CD4-positive, alpha-beta memory T cell (primary cell): ENCODE measurements at regions of chr17 and their contacts with region 1.

Region 1: GRCh38 chr17:76132574-76133338 is 8.3 kb downstream of the FOXJ1 start:
- DNase-seq: no peak
- H3K4me3 ChIP-seq: no peak overlapping the region
- H3K4me3 Mint-ChIP-seq: no peak overlapping the region
- H3K27ac ChIP-seq: no peak overlapping the region
- H3K27ac Mint-ChIP-seq: no peak overlapping the region
- H3K4me1 ChIP-seq: peaks cover 14% of the 10 kb centered on the region
- H3K4me1 Mint-ChIP-seq: peaks cover 6 to 11% (median 9%) of the 10 kb centered on the region in 4 donors
- H3K27me3 ChIP-seq: no peaks in the 10 kb centered on the region
- H3K27me3 Mint-ChIP-seq: no peaks in the 10 kb centered on the region

Region 2: DNA sequence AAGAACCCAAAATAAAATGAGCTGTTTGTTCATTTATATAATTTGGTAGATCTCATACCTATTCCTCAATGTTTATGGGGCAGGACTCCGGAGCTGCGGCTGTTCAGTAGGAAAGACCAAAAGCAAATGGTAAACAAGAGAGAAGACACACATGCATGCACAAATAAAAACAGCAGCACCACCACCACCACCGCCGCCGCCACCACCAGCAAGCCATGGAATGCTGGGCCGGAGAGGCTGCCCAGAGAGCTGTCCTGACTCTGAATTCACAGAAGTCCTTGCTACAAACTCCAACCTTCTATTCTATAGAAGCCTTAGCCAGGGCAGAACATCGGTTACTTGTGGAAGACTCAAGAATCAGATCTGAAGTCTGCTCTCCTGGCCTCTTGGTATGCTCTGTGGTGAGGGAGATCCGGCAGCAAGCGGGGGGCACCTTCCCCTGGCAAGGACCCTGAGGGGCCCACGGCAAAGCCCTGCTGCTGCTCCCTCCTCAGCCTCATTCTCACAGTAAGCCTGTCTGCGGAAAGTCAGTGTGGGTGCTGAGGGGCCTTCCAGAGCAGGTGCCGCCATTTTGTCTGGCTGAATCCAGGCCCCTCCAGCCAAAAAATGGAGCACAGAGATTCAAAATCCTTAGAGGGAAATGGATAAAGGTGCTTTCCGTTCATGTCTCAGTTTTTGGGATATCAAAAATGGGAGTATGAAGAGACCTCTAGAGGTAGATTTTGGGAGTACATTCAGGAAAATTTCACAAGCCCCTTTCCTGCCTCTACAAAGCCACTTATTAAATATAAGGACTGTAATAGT is 14.7 kb after region 1 on chr17:
- CTCF ChIA-PET with region 1: interaction called, 5 read pairs
- POLR2A ChIA-PET with region 1: interaction called, 19 read pairs
- intact Hi-C with region 1: no loop called
- DNase-seq: no peak
- H3K4me3 ChIP-seq: no peak overlapping the region
- H3K4me3 Mint-ChIP-seq: no peak overlapping the region
- H3K27ac ChIP-seq: no peak overlapping the region
- H3K27ac Mint-ChIP-seq: peak overlapping the region; percentile 31 to 99 (median 64)
- H3K4me1 ChIP-seq: peaks cover 63% of the 10 kb centered on the region
- H3K4me1 Mint-ChIP-seq: peaks cover 43 to 77% (median 60%) of the 10 kb centered on the region in 4 donors
- H3K27me3 ChIP-seq: no peaks in the 10 kb centered on the region
- H3K27me3 Mint-ChIP-seq: no peaks in the 10 kb centered on the region

Region 3: GRCh38 chr17:76271669-76272540 is 139.1 kb after region 1 on chr17:
- CTCF ChIA-PET with region 1: interaction called, 232 read pairs
- POLR2A ChIA-PET with region 1: interaction called, 12 read pairs
- intact Hi-C with region 1: no loop called
- DNase-seq: peak; percentile 56 to 85 (median 59)
- H3K4me3 ChIP-seq: peak overlapping the region in 1 of 2 donors; percentile 68
- H3K4me3 Mint-ChIP-seq: peak overlapping the region; percentile 78 to 90 (median 82)
- H3K27ac ChIP-seq: peak overlapping the region; percentile 89
- H3K27ac Mint-ChIP-seq: peak overlapping the region; percentile 86 to 96 (median 92)
- H3K4me1 ChIP-seq: peaks cover 79% of the 10 kb centered on the region
- H3K4me1 Mint-ChIP-seq: peaks cover 21 to 86% (median 48%) of the 10 kb centered on the region in 4 donors
- H3K27me3 ChIP-seq: no peaks in the 10 kb centered on the region
- H3K27me3 Mint-ChIP-seq: no peaks in the 10 kb centered on the region